Naive thymus-derived CD4-positive, alpha-beta T cell (primary cell): ENCODE measurements at regions of chr22 and their contacts with region 1.

Region 1: DNA sequence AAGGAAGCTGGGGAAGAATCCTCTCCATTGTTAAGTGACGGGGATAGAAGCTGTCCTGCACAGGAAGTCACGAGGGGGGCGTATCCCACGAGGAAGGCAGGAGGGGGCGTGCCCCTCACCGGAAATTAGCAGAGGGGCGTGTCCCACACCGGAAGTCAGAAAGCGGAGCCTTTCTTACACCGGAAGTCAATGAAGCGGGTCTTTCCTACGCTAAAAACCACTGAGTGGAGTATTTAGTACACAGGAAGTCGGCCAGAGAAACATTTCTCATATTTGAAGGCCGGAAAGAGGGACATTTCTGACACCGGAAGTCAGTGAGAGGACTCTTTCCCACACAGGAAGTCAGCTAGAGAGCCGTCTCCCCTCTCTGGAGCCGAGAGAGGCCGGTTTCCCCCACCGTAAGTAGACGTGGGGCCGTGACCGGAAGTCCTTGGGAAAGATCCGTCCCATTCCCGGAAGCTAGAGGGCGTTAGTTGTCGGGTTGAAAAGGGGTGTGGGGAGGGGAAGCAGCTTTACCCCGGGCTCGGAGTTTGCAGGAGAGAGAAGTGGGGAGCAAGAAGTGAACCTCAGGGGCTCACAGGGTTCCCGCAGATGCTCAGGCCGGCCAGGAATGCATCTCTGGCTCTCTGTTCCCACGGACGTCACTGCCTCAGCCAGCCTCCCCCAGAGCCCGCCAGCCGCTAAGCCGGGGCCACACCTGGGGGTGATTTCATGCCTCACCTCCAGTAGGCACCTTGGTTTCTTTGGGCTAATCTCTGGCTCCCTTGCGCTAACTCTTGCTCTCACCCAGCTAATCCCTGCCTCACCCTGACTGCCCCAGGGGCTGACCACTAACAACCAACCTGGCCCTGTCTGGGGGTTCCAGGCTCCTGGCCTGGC is 15.4 kb downstream of the MIAT start:
- DNase-seq: peak; percentile 74 to 95 (median 92)
- ATAC-seq: peak; percentile 86
- H3K4me3 ChIP-seq: peak overlapping the region; percentile 90
- H3K4me3 Mint-ChIP-seq: peak overlapping the region; percentile 88 to 98 (median 97)
- H3K27ac ChIP-seq: peak overlapping the region; percentile 93
- H3K27ac Mint-ChIP-seq: peak overlapping the region; percentile 95 to 100 (median 99)
- H3K4me1 ChIP-seq: peaks cover 64 to 71% of the 10 kb centered on the region in 2 donors
- H3K4me1 Mint-ChIP-seq: peaks cover 63 to 90% (median 83%) of the 10 kb centered on the region in 7 donors
- H3K27me3 ChIP-seq: no peaks in the 10 kb centered on the region
- H3K27me3 Mint-ChIP-seq: peaks cover 0 to 5% (median 0%) of the 10 kb centered on the region in 5 donors

Region 2: GRCh38 chr22:25067851-25068421 is 1604.9 kb before region 1 on chr22:
- CTCF ChIA-PET with region 1: no interaction called
- POLR2A ChIA-PET with region 1: no interaction called
- intact Hi-C with region 1: loop called in 1 of 2 experiments (anchors 2 kb)
- DNase-seq: peak; percentile 56 to 95 (median 92)
- ATAC-seq: peak; percentile 94
- H3K4me3 ChIP-seq: peak overlapping the region; percentile 43
- H3K4me3 Mint-ChIP-seq: peak overlapping the region; percentile 81 to 94 (median 87)
- H3K27ac ChIP-seq: peak overlapping the region; percentile 76
- H3K27ac Mint-ChIP-seq: peak overlapping the region; percentile 86 to 99 (median 98)
- H3K4me1 ChIP-seq: peaks cover 63 to 67% of the 10 kb centered on the region in 2 donors
- H3K4me1 Mint-ChIP-seq: peaks cover 51 to 96% (median 89%) of the 10 kb centered on the region in 7 donors
- H3K27me3 ChIP-seq: no peaks in the 10 kb centered on the region
- H3K27me3 Mint-ChIP-seq: no peaks in the 10 kb centered on the region

Region 3: DNA sequence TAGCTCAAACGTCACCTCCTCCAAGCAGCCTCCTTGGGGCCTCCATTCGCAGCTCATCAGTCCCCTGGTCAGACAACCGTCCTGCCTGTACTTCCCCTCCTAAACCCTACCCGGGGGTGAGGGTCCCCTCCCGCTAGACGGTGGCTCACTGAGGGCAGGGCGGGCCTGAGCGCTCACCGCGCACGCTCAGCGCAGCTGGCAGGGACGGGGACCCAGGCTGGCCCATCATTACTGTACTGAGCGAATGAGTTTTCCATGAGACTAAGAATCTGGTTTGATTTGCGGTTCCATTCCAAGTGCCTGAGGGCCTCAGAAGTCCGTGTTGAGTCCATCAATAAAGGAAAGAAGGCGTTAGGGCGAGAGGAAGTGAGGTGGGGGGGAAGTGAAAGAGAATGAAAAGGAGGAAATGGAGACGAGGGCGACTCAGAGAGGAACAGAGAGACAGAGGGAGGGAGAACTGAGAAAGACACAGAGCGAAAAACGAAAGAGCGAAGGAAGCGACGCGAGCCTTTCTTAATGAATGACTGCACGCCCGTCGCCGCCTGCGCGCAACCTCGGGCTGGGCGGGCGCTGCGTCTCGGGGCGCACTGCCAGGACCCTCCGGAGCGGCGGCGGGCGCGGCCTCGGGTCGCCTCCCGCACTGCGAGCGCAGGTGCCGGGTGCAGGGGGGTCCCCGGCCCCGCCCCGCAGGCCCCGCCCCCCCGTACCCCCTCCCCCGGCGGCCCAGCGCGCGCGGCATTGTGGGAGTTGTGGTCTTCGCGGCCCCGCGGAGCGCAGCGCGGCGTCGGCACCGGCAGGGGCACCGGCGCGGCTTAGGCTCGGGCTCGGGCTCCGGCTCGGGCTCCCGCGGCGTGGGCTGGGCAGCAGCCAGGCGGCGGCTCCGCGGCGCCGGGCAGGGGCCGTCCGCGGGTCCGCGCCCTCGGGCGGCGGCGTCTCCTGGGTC is 244.0 kb before region 1 on chr22 and contains the start of gene ASPHD2:
- CTCF ChIA-PET with region 1: no interaction called
- POLR2A ChIA-PET with region 1: no interaction called
- intact Hi-C with region 1: loop called (anchors 1 kb)
- DNase-seq: peak; percentile 72 to 87 (median 83)
- ATAC-seq: peak; percentile 92
- H3K4me3 ChIP-seq: peak within 1 kb of the TSS; percentile 93
- H3K4me3 Mint-ChIP-seq: peak within 1 kb of the TSS; percentile 91 to 99 (median 99)
- H3K27ac ChIP-seq: peak within 1 kb of the TSS; percentile 88
- H3K27ac Mint-ChIP-seq: peak within 1 kb of the TSS; percentile 94 to 99 (median 98)
- H3K4me1 ChIP-seq: peaks cover 8 to 17% of the 10 kb centered on the region in 2 donors
- H3K4me1 Mint-ChIP-seq: peaks cover 14 to 55% (median 33%) of the 10 kb centered on the region in 7 donors
- H3K27me3 ChIP-seq: no peaks in the 10 kb centered on the region
- H3K27me3 Mint-ChIP-seq: peaks cover 0 to 22% (median 5%) of the 10 kb centered on the region in 5 donors
- total RNA-seq, gene ASPHD2: 1.8 to 18.1 (median 2.7) TPM

Region 4: GRCh38 chr22:26511857-26512793 is 160.7 kb before region 1 on chr22 and contains the start of gene TFIP11:
- CTCF ChIA-PET with region 1: no interaction called
- POLR2A ChIA-PET with region 1: interaction called, 6 read pairs
- intact Hi-C with region 1: loop called (anchors 1 kb)
- DNase-seq: peak; percentile 80 to 93 (median 84)
- ATAC-seq: peak; percentile 97
- H3K4me3 ChIP-seq: peak within 1 kb of the TSS; percentile 89
- H3K4me3 Mint-ChIP-seq: peak within 1 kb of the TSS; percentile 96 to 100 (median 99)
- H3K27ac ChIP-seq: peak within 1 kb of the TSS; percentile 96
- H3K27ac Mint-ChIP-seq: peak within 1 kb of the TSS; percentile 96 to 100 (median 99)
- H3K4me1 ChIP-seq: peaks cover 9 to 23% of the 10 kb centered on the region in 2 donors
- H3K4me1 Mint-ChIP-seq: peaks cover 29 to 52% (median 50%) of the 10 kb centered on the region in 7 donors
- H3K27me3 ChIP-seq: no peaks in the 10 kb centered on the region
- H3K27me3 Mint-ChIP-seq: no peaks in the 10 kb centered on the region
- total RNA-seq, gene TFIP11: 63.6 to 107 (median 72.9) TPM

Region 5: GRCh38 chr22:26658671-26659478 is 14.0 kb before region 1 on chr22:
- CTCF ChIA-PET with region 1: interaction called, 9 read pairs
- POLR2A ChIA-PET with region 1: interaction called, 26 read pairs
- intact Hi-C with region 1: loop called (anchors 1 kb)
- DNase-seq: peak in 6 of 9 donors; percentile 32 to 77 (median 40)
- ATAC-seq: peak; percentile 75
- H3K4me3 ChIP-seq: peak overlapping the region; percentile 87
- H3K4me3 Mint-ChIP-seq: peak overlapping the region; percentile 80 to 98 (median 88)
- H3K27ac ChIP-seq: no peak overlapping the region
- H3K27ac Mint-ChIP-seq: peak overlapping the region in 7 of 9 donors; percentile 47 to 91 (median 74)
- H3K4me1 ChIP-seq: peaks cover 15 to 20% of the 10 kb centered on the region in 2 donors
- H3K4me1 Mint-ChIP-seq: peaks cover 14 to 54% (median 21%) of the 10 kb centered on the region in 7 donors
- H3K27me3 ChIP-seq: no peaks in the 10 kb centered on the region
- H3K27me3 Mint-ChIP-seq: peaks cover 0 to 10% (median 0%) of the 10 kb centered on the region in 5 donors

Region 6: DNA sequence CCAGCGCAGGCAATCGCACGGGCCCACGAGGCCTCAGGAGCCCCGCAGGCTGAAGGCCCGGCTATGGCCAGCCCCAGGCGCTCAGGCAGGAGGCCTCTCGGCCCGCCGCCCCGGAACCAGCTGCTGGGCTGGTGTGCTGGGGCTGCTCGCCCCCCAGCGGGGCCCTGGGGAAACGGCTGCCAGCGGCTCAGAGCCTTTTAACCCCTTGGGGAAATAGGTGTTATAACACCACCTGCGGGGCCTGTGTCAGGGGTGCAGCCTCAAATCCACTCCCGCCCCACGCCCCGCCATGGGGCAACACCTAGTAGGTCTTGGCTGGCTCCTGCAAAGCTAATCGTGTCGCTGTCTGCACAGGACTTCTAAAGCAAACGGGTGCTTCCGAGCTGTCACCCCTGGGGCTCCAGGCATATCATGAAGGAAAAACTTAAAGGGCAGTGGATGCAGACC is 1769.5 kb after region 1 on chr22:
- CTCF ChIA-PET with region 1: no interaction called
- POLR2A ChIA-PET with region 1: no interaction called
- intact Hi-C with region 1: loop called in 1 of 2 experiments (anchors 10 kb)
- DNase-seq: peak; percentile 54 to 79 (median 77)
- ATAC-seq: peak; percentile 91
- H3K4me3 ChIP-seq: peak overlapping the region; percentile 72
- H3K4me3 Mint-ChIP-seq: peak overlapping the region; percentile 88 to 97 (median 94)
- H3K27ac ChIP-seq: peak overlapping the region; percentile 58
- H3K27ac Mint-ChIP-seq: peak overlapping the region; percentile 66 to 90 (median 84)
- H3K4me1 ChIP-seq: peaks cover 0 to 15% of the 10 kb centered on the region in 2 donors
- H3K4me1 Mint-ChIP-seq: peaks cover 10 to 27% (median 24%) of the 10 kb centered on the region in 7 donors
- H3K27me3 ChIP-seq: peaks cover 0 to 4% of the 10 kb centered on the region in 2 donors
- H3K27me3 Mint-ChIP-seq: peaks cover 0 to 26% (median 0%) of the 10 kb centered on the region in 5 donors